ENCODE measurements at regions of chr9 and their contacts with region 1.

Region 1: GRCh38 chr9:136283291-136284235 is 20.3 kb downstream of the CCDC187 start:
- DNase-seq: peak; percentile 48 to 80 (median 69)
- ATAC-seq: peak; percentile 88
- H3K4me3 ChIP-seq: no peak overlapping the region
- H3K4me3 Mint-ChIP-seq: no peak overlapping the region
- H3K27ac ChIP-seq: no peak overlapping the region
- H3K27ac Mint-ChIP-seq: no peak overlapping the region
- H3K4me1 ChIP-seq: peaks cover 3% of the 10 kb centered on the region
- H3K4me1 Mint-ChIP-seq: peaks cover 2% of the 10 kb centered on the region
- H3K27me3 ChIP-seq: peaks cover 0 to 3% of the 10 kb centered on the region in 2 experiments
- H3K27me3 Mint-ChIP-seq: peaks cover 3% of the 10 kb centered on the region
- CTCF ChIP-seq: peak; percentile 73

Region 2: DNA sequence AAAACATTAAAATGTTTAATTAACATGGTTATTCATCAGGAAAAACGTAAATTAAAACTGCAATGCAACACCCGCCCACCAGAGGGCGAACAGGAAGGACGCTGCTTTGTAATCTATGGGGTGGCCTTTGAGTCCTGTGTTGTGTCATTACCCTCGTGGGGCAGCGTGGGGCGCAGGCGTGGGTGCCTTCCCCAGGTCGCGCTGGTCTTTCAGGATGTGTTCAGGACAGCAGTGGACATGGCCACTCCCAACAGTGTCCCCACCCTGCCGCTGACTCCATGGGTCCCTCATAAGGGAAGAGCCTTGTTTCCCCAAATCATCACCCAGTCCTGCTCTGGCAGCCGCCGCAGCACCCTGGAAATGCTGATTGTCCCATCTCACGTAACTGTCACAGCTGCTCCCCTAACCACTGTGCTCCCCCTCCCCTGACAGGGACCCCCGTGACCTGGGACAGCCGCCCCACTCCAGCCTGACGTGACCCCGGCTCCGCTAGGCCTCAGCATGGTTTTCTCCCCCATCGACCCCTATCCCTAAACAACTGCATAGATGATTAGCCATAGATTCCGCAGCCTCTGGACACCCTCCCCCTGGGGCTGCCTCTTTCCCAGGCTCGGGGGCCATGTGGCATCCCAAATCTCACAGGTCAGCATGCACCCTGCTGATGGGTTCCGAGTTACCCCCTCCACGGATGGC is 680.6 kb before region 1 on chr9:
- CTCF ChIA-PET with region 1: no interaction called
- POLR2A ChIA-PET with region 1: no interaction called
- intact Hi-C with region 1: loop called in 1 of 2 experiments (anchors 10 kb)
- DNase-seq: peak in 8 of 9 experiments; percentile 30 to 70 (median 56)
- ATAC-seq: no peak
- H3K4me3 ChIP-seq: no peak overlapping the region
- H3K4me3 Mint-ChIP-seq: no peak overlapping the region
- H3K27ac ChIP-seq: no peak overlapping the region
- H3K27ac Mint-ChIP-seq: no peak overlapping the region
- H3K4me1 ChIP-seq: no peaks in the 10 kb centered on the region
- H3K4me1 Mint-ChIP-seq: no peaks in the 10 kb centered on the region
- H3K27me3 ChIP-seq: peaks cover 0 to 3% of the 10 kb centered on the region in 2 experiments
- H3K27me3 Mint-ChIP-seq: peaks cover 15% of the 10 kb centered on the region
- CTCF ChIP-seq: peak; percentile 77

Region 3: GRCh38 chr9:135864447-135865049 is 419.0 kb before region 1 on chr9:
- CTCF ChIA-PET with region 1: no interaction called
- POLR2A ChIA-PET with region 1: no interaction called
- intact Hi-C with region 1: loop called in 1 of 2 experiments (anchors 5 kb)
- DNase-seq: peak; percentile 52 to 82 (median 65)
- ATAC-seq: peak; percentile 66
- H3K4me3 ChIP-seq: no peak overlapping the region
- H3K4me3 Mint-ChIP-seq: no peak overlapping the region
- H3K27ac ChIP-seq: no peak overlapping the region
- H3K27ac Mint-ChIP-seq: peak overlapping the region; percentile 32
- H3K4me1 ChIP-seq: no peaks in the 10 kb centered on the region
- H3K4me1 Mint-ChIP-seq: peaks cover 17% of the 10 kb centered on the region
- H3K27me3 ChIP-seq: no peaks in the 10 kb centered on the region
- H3K27me3 Mint-ChIP-seq: no peaks in the 10 kb centered on the region
- CTCF ChIP-seq: peak; percentile 87

Region 4: GRCh38 chr9:136133191-136133958 is 150.2 kb before region 1 on chr9:
- CTCF ChIA-PET with region 1: no interaction called
- POLR2A ChIA-PET with region 1: no interaction called
- intact Hi-C with region 1: loop called in 1 of 2 experiments (anchors 2 kb)
- DNase-seq: peak in 3 of 9 experiments; percentile 25 to 50 (median 49)
- ATAC-seq: peak; percentile 72
- H3K4me3 ChIP-seq: peak overlapping the region in 1 of 2 experiments; percentile 9
- H3K4me3 Mint-ChIP-seq: peak overlapping the region; percentile 73
- H3K27ac ChIP-seq: no peak overlapping the region
- H3K27ac Mint-ChIP-seq: no peak overlapping the region
- H3K4me1 ChIP-seq: peaks cover 6% of the 10 kb centered on the region
- H3K4me1 Mint-ChIP-seq: peaks cover 12% of the 10 kb centered on the region
- H3K27me3 ChIP-seq: peaks cover 4 to 14% of the 10 kb centered on the region in 2 experiments
- H3K27me3 Mint-ChIP-seq: peaks cover 36% of the 10 kb centered on the region
- CTCF ChIP-seq: peak; percentile 12

Region 5: DNA sequence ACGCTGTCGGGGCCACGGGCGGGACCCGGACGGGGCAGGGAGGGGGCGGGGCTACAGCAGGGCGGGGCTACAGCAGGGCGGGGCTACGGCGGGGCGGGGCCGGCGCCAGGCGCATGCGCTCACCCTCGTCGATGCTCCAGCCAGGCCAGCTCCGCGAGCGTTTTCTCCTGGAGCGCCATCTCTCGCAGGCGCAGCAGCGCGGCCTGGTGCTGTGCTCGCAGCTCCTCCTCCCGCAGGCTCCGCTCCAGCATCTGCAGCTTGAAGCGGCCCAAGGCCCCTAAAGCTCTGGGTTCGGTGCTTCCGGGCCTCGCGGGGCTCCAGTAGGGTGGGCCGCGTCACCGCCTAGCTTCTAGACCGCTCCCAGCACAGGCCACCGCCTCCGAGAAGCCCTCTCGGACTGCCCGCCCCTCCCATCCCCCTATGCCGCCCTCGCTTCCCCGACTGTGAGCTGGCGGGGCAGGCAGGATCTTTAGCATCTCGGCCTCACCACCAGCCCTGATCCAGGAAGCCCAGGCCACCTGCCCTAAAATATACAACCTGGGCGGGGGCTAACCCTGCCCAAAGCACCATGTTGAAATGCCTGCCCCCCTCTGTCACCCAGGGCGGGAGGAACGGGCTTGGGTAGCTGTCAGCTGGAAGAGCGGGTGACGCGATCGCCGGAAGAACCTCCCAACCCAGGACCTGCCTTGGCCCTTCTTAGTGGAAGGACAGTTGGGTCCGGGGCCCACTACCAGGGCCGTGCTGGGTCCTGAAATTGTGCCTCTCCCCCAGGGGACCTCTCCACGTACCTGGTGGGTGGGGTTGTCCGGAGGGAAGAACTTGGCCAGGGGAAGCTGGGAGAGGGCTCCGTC is 16.1 kb before region 1 on chr9:
- CTCF ChIA-PET with region 1: interaction called, 13 read pairs
- POLR2A ChIA-PET with region 1: no interaction called
- intact Hi-C with region 1: no loop called
- DNase-seq: peak; percentile 74 to 94 (median 85)
- ATAC-seq: peak; percentile 98
- H3K4me3 ChIP-seq: peak overlapping the region; percentile 74 to 80
- H3K4me3 Mint-ChIP-seq: peak overlapping the region; percentile 81
- H3K27ac ChIP-seq: peak overlapping the region; percentile 51 to 58
- H3K27ac Mint-ChIP-seq: peak overlapping the region; percentile 58
- H3K4me1 ChIP-seq: peaks cover 6% of the 10 kb centered on the region
- H3K4me1 Mint-ChIP-seq: peaks cover 6% of the 10 kb centered on the region
- H3K27me3 ChIP-seq: peaks cover 0 to 2% of the 10 kb centered on the region in 2 experiments
- H3K27me3 Mint-ChIP-seq: no peaks in the 10 kb centered on the region
- CTCF ChIP-seq: peak; percentile 18